Mammary epithelial cell (primary cell): ENCODE measurements at regions of chr9 and their contacts with region 1.

Region 1: DNA sequence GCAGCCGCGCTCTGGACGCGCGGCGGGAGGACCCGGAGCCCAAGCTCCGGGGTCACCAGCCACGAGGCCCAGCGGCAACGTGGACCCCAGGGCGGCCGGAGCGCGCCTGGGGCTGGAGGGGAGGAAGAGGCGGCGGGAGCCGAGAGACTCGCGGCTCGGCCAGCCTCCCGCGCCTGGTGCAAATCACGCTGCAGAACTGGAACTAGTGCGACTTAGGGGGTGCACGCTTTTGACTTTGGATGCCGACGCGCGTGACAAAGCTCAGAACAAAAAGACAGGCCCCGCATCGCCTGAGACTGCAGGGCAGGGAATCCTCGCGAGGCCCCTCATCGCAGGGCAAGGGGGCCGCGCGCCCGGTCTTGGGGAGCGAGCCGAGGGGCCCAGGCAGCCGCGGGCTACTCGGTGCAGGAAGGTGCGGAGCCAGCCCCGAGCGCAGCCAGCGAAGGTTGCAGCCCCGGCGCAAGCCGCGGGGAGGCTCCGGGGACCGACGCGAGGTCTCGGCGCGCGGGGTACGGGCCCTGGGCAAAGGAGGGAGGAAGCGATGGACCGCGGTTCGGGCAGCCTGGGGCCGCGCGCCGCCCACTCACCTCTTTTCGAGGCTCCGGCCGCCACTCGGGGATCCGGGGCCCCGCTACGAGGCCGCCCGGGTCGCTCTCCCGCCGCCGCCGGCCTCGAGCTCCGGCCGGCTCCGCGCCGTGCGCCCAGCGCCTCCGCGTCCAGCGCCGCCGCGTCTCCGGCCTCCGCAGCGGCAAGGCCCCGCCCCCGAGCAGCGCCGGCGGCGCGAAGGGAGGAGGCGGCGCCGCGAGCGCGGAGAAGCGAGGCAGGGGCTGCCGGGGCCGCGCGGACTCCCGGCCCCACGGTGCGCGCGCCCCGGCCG is at the start of gene GOLM1:
- DNase-seq: peak; percentile 57
- H3K4me3 ChIP-seq: peak within 1 kb of the TSS; percentile 84 to 89 (median 87)
- H3K27ac ChIP-seq: peak within 1 kb of the TSS; percentile 35
- H3K4me1 ChIP-seq: peaks cover 12% of the 10 kb centered on the region
- H3K27me3 ChIP-seq: no peaks in the 10 kb centered on the region
- CTCF ChIP-seq: peak in 1 of 2 donors; percentile 35
- total RNA-seq, gene GOLM1: 17.7 to 29.5 TPM

Region 2: DNA sequence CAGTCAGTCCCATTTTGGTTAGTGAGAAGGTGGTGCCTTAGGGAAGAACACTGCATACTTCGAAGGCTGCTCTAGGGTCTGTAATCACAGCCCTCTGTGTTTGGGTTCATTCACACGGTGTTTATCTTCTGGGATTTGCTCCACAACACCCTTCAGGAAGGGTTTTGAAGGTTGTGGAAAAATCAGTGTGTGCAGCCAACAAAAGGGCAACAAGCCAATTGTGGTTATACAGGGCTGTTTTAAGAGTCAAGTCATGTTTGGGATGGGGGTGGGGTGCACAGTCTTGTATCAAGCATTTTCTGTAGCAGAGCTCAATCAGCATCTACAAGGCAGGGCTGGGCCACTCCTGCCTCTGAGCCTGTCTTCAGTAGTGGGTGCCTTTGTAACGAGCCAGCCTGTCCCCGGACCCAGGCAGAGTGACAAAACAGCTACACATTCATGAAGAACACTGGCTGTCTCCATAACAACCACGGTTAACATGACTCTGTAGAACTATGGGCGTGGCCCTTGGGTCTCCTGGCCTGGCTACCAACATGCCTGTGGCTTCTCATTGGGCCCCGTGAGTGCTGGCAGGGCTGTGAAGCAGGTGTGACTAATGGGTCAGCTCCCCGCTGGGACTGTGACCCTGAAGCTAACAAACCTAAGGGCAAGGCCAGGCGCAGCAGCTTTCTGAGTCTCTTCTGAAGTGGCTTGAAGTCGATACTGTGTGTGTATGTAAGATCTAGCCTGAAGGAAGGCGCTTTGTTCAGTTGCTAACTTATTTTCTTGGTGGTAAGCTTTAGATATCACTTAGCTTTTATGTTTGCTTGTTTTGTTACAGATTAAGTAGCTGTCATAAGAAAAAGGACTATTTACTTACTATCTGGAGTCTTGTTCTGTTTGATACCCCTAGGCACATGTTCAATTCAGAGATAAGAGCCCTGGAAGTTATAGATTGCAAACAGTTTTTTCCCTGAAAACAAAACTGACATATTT is 28.2 kb after region 1 on chr9:
- CTCF ChIA-PET with region 1: no interaction called
- dilution Hi-C with region 1: no loop called
- in situ Hi-C with region 1: no loop called
- intact Hi-C with region 1: loop called (anchors 2 kb)
- DNase-seq: peak; percentile 91
- H3K4me3 ChIP-seq: no peak overlapping the region
- H3K27ac ChIP-seq: peak overlapping the region; percentile 57
- H3K4me1 ChIP-seq: peaks cover 15% of the 10 kb centered on the region
- H3K27me3 ChIP-seq: no peaks in the 10 kb centered on the region
- CTCF ChIP-seq: no peak

Region 3: DNA sequence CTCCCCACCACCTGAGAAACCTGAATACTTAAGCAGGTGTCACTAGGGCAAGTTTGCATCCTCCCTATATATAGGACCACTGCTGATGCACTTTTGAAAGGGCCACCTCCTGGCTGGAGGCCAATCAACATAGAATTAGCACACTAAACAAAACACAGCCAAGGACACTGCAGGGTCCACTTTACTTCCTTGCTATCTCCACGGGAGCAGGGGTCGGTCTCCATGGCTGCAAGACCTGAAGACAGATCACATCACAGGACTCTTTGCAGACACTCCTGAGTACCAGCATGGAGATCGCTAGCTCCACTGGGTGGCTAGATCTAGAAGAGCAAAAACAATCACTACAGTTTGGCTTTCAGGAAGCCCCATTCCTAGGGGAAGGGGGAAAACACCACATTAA is 88.1 kb after region 1 on chr9:
- CTCF ChIA-PET with region 1: no interaction called
- dilution Hi-C with region 1: no loop called
- in situ Hi-C with region 1: no loop called
- intact Hi-C with region 1: loop called (anchors 10 kb)
- DNase-seq: no peak
- H3K4me3 ChIP-seq: no peak overlapping the region
- H3K27ac ChIP-seq: no peak overlapping the region
- H3K4me1 ChIP-seq: no peaks in the 10 kb centered on the region
- H3K27me3 ChIP-seq: no peaks in the 10 kb centered on the region
- CTCF ChIP-seq: peak in 1 of 2 donors; percentile 13

Region 4: DNA sequence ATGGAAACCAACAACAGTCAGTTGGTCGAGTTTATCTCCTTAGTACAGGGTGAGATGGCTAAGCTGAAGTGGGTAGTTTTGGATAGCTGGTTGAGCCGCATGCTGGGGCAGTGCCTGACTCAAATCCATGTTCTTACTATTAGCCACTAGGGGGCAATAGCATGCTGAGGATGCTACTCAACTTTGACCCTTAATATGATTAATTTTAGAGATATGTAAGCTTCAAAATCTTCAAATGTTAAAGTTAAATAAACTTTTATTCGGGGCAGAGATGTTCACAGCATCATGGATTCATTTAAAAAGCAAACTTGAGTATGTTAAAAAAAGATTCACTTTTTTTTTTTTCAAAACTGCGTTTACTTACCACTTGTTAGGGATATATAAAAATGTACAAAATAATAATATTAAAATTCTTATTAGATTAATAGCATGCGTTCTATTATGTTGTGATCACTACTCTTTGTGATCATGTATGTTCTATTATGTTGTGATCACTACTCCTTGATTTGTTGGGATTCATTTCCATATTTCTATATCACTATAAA is 103.3 kb after region 1 on chr9:
- CTCF ChIA-PET with region 1: no interaction called
- dilution Hi-C with region 1: no loop called
- in situ Hi-C with region 1: no loop called
- intact Hi-C with region 1: loop called (anchors 5 kb)
- DNase-seq: peak; percentile 25
- H3K4me3 ChIP-seq: no peak overlapping the region
- H3K27ac ChIP-seq: no peak overlapping the region
- H3K4me1 ChIP-seq: no peaks in the 10 kb centered on the region
- H3K27me3 ChIP-seq: no peaks in the 10 kb centered on the region
- CTCF ChIP-seq: peak; percentile 82 to 86